PC-3 (cell line): ENCODE measurements at regions of chr3 and their contacts with region 1.

Region 1: DNA sequence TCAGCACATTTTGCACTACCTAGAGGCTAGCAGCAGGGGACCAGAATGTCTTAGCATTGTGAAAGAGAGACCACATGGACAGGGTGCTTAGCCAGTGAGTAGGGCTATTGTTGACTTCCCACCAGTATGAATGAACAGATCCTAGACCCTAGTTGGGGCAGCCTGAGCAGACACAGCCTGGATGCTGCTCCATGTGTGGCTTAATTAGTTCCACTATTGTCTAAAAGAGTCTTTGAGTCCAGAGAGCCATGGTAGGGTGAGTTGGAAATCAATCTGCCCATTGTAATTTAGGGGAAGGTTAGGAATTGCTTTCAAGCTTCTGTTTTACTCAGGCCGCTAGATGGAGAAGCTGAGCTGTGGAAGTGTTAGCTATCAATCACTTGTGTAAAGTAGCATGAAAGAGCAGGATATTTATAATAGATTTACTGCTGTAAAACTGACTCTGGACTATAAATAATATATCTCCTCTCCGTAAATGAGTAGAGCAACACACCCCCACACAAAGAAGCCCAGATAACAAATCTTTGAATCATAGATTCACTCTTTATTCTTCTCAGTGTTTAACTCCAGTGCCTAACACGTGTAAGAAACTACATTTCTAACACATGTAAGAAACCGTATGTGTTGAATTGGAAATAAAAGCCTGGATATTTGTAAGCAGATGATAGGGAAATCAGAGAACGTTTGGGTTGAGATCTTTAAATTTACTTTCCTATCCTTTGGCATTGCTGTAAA is 4.1 kb upstream of the GCSAM start:
- DNase-seq: peak; percentile 81
- ATAC-seq: peak; percentile 83
- H3K4me3 ChIP-seq: no peak overlapping the region
- H3K27ac ChIP-seq: no peak overlapping the region
- H3K4me1 ChIP-seq: peaks cover 11% of the 10 kb centered on the region
- H3K27me3 ChIP-seq: no peaks in the 10 kb centered on the region
- CTCF ChIP-seq: peak; percentile 88

Region 2: GRCh38 chr3:112111785-112112402 is 25.2 kb before region 1 on chr3:
- CTCF ChIA-PET with region 1: interaction called, 18 read pairs
- POLR2A ChIA-PET with region 1: no interaction called
- intact Hi-C with region 1: no loop called
- DNase-seq: peak; percentile 89
- ATAC-seq: peak; percentile 95
- H3K4me3 ChIP-seq: no peak overlapping the region
- H3K27ac ChIP-seq: no peak overlapping the region
- H3K4me1 ChIP-seq: peaks cover 13% of the 10 kb centered on the region
- H3K27me3 ChIP-seq: no peaks in the 10 kb centered on the region
- CTCF ChIP-seq: peak; percentile 94

Region 3: GRCh38 chr3:112253301-112253971 is 116.3 kb after region 1 on chr3:
- CTCF ChIA-PET with region 1: no interaction called
- POLR2A ChIA-PET with region 1: no interaction called
- intact Hi-C with region 1: no loop called
- DNase-seq: no peak
- ATAC-seq: no peak
- H3K4me3 ChIP-seq: no peak overlapping the region
- H3K27ac ChIP-seq: no peak overlapping the region
- H3K4me1 ChIP-seq: no peaks in the 10 kb centered on the region
- H3K27me3 ChIP-seq: no peaks in the 10 kb centered on the region; the same call in 1 of the 2 replicates
- CTCF ChIP-seq: no peak

Region 4: GRCh38 chr3:112293368-112294321 is 156.5 kb after region 1 on chr3 and contains the start of gene SLC9C1:
- CTCF ChIA-PET with region 1: interaction called, 17 read pairs
- POLR2A ChIA-PET with region 1: no interaction called
- intact Hi-C with region 1: loop called (anchors 1 kb)
- DNase-seq: peak; percentile 82
- ATAC-seq: peak; percentile 88
- H3K4me3 ChIP-seq: peak within 1 kb of the TSS; percentile 61
- H3K27ac ChIP-seq: no peak within 1 kb of the TSS
- H3K4me1 ChIP-seq: no peaks in the 10 kb centered on the region
- H3K27me3 ChIP-seq: peaks cover 15% of the 10 kb centered on the region; the same call in 1 of the 2 replicates
- CTCF ChIP-seq: peak; percentile 82
- total RNA-seq, gene SLC9C1: not detected in 2 replicates

Region 5: DNA sequence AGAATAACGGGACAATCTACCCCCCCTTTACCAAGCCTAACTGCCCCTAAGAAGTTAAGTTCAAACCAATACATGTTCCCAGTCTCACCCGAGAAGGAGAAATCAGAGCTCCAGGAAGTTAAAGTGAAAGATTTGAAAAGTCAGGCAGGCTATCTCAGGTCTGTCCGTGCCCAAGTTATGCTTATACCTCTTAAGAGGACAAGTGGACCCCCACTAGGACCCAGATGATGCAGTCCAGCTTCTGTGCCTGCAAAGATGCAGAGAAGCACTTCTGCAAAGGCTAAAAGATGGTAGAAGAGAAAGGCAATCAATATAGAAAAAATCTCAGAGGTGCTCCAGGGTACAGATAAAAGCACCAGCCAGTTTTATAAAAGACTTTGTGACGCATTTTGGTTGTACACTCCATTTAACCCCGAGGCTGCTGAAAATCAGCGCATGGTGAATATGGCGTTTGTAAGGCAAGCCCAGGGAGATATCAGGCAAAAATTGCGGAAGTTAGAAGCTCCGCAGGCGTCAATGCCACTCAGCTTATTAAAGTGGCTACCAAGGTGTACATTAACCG is 166.7 kb after region 1 on chr3:
- CTCF ChIA-PET with region 1: no interaction called
- POLR2A ChIA-PET with region 1: no interaction called
- intact Hi-C with region 1: no loop called
- DNase-seq: no peak
- ATAC-seq: no peak
- H3K4me3 ChIP-seq: no peak overlapping the region
- H3K27ac ChIP-seq: no peak overlapping the region
- H3K4me1 ChIP-seq: no peaks in the 10 kb centered on the region
- H3K27me3 ChIP-seq: peaks cover under 1% of the 10 kb centered on the region; the same call in 1 of the 2 replicates
- CTCF ChIP-seq: no peak

Region 6: DNA sequence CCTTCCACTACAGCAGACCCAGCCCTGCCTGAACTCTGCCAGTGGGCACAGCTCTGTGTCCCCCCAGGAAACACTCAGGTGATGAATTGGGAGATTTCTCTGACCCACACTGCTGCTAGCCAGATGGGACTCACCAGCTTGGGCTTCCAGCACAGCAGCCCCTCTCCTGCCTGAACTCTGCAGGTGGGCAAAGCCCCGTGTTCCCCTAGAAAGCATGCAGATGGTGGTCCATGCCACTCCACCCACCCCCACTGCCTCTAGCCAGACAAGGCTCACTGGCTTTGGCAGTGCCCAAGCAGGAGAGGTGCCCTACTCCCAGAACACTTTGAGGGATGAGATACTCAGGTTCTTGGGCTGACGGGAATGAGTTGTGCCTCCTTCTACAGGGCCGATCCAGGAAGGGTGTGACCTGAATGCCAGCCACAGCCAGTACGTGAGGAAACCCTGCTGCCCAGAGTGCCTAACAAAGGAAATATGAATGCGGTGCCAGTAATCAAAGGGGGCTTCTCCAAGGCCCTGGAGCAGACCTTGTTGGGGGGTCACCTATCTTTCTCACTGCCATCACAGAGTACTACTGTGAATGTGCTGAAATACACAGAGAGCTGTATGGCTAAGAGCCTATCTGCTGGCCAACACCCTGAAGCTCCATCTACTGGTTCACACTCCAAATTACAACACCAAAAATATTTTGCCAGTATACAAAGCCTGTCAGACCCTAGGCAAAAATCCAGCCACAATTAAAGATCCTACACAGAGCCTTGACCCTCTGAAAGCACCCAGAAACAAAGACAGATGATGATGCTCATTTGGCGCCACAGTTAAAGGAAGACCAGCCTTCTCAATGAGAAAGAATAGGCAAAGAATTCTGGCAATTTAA is 300.3 kb after region 1 on chr3:
- CTCF ChIA-PET with region 1: interaction called, 5 read pairs
- POLR2A ChIA-PET with region 1: no interaction called
- intact Hi-C with region 1: loop called (anchors 1 kb)
- DNase-seq: peak; percentile 75
- ATAC-seq: peak; percentile 98
- H3K4me3 ChIP-seq: no peak overlapping the region
- H3K27ac ChIP-seq: no peak overlapping the region
- H3K4me1 ChIP-seq: no peaks in the 10 kb centered on the region
- H3K27me3 ChIP-seq: peaks cover 46% of the 10 kb centered on the region
- CTCF ChIP-seq: peak; percentile 68

Region 7: DNA sequence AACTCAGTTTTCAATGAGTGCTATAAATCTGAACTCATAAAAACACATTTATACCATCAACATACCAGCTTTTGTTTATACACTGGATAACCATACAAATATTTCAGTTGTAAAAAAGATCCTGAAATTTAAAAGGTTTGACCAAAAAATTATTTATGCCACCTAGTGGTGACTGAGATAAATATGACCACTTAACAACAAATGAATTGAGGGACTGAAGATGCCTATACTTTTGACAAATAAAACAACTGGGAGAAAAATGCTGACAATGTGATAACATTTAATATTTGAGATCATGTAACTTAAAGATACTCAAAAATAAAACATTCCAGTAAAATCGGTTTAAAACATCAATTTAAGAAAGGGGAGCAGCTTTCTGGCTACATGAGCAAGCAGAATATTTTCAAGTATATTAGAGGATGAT is 394.2 kb after region 1 on chr3:
- CTCF ChIA-PET with region 1: interaction called, 3 read pairs
- POLR2A ChIA-PET with region 1: no interaction called
- intact Hi-C with region 1: loop called (anchors 5 kb)
- DNase-seq: peak; percentile 71
- ATAC-seq: peak; percentile 4; the same call in 1 of the 2 replicates
- H3K4me3 ChIP-seq: no peak overlapping the region
- H3K27ac ChIP-seq: peak overlapping the region; percentile 68; the same call in 1 of the 2 replicates
- H3K4me1 ChIP-seq: peaks cover 20% of the 10 kb centered on the region
- H3K27me3 ChIP-seq: no peaks in the 10 kb centered on the region
- CTCF ChIP-seq: peak; percentile 86